ENCODE measurements at regions of chr10 and their contacts with region 1.

Region 1: GRCh38 chr10:75408911-75409885 is 7.6 kb upstream of the ZNF503 start:
- DNase-seq: peak; percentile 85

Region 2: GRCh38 chr10:74813381-74814259 is 595.6 kb before region 1 on chr10:
- intact Hi-C with region 1: no loop called
- DNase-seq: no peak

Region 3: DNA sequence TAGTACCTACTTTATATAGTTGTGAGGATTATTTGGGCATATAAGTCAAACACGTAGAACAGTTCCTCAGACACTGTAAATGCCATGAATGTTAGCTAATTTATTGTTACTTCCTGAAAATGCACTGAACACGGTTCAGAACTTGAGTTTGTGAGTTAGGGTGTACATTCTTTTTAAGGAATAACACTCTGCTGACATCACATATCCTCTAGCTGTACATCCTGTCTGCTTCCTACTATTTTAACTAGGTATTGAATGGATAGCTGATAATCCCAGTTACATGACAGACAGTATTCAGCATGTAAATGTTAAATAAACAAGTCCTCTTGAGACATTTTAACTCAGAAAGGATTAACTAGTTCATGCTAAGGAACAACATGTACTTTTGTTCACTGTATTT is 281.7 kb before region 1 on chr10:
- intact Hi-C with region 1: no loop called
- DNase-seq: no peak

Region 4: DNA sequence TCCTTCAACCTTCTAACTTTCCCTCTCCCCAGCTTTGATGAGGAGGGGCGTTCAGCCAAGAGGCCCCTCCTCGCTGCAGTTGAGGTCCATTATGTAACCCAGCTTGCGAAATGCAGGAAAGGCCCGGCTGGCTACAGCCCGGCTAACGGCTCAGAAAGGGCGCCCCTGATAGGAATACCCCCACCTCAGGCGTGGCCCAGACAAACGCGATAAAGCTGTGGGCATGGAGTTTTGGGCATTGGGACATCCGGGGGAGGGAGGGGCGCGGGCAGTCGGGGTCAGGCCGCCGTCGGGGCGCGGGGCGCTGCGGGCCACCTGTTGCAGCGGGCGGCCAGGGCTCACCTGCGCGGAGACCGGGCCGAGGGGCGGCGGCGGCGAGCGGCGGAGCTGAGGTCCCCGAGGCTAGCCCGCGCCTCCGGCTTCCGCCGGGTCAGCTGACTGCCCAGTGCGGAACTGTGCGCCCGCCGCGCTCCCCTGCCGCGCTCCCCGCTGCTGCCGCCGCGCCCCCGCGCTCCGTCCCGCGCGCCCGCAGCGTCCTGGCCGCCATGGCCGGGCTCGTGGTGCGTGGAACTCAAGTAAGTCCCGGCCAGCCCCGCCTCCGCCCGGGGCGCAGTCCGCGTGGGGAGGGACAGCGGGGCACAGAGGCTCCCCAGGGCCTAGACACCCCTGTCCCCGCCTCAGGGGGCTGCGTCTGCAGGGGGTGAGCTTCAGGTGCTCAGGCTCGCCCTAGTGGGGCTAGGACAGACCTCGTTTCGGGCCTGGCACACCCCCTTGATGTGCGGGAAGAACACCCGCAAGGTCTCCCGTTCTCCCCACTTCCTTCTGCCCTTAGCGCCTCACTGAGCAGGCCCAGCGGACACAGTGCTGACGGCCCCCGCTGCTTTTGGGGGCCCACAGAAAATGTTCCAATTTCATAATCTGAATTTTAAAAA is 22.2 kb after region 1 on chr10 and contains the start of gene LRMDA:
- intact Hi-C with region 1: loop called (anchors 2 kb)
- DNase-seq: peak; percentile 83
- total RNA-seq, gene LRMDA: 4.5 TPM

Region 5: GRCh38 chr10:75469006-75469616 is 59.9 kb after region 1 on chr10:
- intact Hi-C with region 1: loop called (anchors 5 kb)
- DNase-seq: no peak

Measured in cardiac septum (tissue), 1 donor.